Astrocyte of the cerebellum (primary cell): ENCODE measurements at regions of chr10 and their contacts with region 1.

Region 1: GRCh38 chr10:60434418-60435046 is 44.9 kb upstream of the ANK3 start:
- DNase-seq: peak; percentile 65
- H3K4me3 ChIP-seq: no peak overlapping the region
- CTCF ChIP-seq: peak; percentile 63

Region 2: GRCh38 chr10:60114765-60115586 is 319.6 kb before region 1 on chr10:
- in situ Hi-C with region 1: loop called (anchors 25 kb)
- DNase-seq: peak; percentile 56
- H3K4me3 ChIP-seq: no peak overlapping the region
- CTCF ChIP-seq: peak; percentile 63

Region 3: DNA sequence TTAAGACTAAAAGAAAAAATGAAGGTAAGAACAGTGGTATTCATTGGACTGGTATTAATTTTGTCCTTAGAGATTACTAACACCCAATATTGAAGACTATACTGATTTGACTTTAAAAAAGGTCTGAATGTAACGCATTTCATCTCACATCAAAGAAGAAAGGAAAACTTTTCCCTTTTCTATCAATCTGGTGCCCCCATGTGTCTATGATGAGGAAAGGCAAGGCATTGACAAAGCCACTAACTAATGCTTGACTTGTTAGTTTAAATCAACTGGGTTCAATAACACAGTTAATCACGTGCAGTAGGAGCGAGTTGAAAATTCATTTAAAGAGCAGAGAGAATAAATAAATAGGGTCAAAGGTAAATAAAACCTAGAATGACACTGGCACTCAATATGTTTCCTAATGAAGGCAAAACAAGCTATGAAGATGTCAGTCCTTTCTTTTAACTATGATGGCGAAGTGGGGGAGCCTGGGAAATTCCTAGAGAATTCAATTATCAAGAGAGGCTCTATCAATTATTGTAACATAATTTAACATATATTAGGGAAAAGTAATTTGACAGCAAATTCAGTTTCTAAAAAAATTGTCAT is 225.8 kb before region 1 on chr10:
- in situ Hi-C with region 1: loop called (anchors 25 kb)
- DNase-seq: peak; percentile 22
- H3K4me3 ChIP-seq: no peak overlapping the region
- CTCF ChIP-seq: peak; percentile 79

Region 4: DNA sequence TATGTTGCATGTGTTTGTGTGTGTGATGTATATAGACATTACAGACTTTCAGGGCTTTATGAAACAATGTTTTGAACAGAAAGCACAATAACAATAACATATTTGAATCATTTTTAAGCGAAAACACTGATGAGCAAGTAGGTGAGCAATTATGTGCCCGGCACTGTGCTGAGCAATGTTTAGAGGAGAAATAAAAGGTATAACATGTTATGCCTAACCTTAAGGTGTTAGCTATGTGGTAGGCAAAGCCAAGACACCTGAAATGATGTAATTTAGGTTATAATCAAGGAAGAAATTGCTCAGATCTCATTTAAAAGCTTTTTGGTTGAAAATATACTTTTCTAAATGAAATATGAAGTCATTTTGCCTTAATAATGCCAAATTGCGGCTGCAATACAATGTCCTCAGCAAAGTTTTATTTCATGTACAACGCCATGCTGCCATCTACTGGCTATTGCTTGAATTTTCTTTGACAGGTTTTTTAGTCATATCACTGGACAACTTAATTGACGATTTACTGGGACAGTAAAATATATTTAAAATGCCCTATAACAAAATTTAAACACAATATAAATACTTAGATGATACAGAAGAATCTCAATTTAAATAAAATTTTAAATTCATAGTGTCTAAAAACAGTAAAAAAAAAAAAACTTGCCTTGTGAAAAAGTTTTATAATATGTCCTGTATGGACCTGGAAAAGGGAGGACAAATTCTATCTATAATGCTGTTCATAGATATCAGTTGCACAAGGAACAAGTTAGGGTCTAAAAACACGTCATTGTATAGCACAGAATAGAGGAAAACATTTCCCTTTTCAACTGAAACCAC is 212.6 kb after region 1 on chr10:
- in situ Hi-C with region 1: loop called (anchors 25 kb)
- DNase-seq: peak; percentile 72
- H3K4me3 ChIP-seq: no peak overlapping the region
- CTCF ChIP-seq: peak; percentile 50

Region 5: DNA sequence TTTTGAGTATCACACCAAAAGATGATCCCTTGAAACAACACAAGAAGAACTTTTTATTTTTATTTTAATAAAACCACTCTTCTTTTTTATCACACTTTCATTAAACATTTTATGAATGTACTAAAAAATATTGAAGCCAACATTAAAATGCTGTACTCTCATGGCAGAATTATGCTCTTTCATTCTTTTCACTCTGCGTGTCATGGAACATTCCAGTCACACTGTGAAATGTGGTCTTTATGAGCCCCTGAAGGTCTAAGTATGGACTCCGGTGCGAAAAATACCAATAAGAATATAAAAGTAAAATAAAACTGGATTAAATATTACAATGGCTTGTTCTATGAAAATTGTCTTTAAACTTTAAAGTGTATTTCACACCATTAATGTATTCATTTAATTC is 870.2 kb after region 1 on chr10:
- in situ Hi-C with region 1: no loop called
- DNase-seq: no peak
- H3K4me3 ChIP-seq: no peak overlapping the region
- CTCF ChIP-seq: no peak